Vagina (tissue), 2 donors: ENCODE measurements at regions of chr17 and their contacts with region 1.

Region 1: DNA sequence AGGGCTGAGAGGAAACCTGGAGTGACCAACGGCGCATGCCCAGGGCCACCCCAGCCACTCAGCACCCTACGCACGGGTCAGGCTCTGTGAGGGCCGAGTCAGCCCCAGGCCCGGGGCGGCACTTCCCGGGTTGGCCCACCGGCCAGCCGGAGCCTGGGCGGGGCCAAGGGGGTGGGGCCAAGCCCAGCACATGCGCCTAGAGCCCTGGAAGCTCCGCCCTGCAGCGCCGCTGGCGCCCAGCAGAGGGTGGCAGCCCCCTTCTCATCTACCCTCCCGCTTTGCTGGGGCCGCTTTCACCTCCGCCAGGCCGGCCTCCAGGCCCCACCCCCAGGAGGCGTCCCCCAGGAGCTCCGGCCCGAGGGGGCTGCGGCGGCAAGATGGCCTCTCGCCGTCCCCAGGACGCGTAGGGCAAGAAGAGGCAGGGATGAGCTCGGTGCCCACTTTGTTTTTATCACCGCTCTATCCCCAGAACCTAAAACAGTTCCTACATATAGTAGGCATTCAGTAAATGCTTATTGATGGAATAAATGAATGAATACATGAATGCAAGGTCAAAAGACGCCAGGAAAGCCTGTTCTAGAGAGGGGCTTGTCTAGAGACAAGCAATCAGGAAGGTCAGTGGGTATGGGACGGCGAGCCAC is 31.3 kb downstream of the MYO18A start:
- DNase-seq: no peak
- H3K4me3 ChIP-seq: peak overlapping the region; percentile 42 to 47
- H3K27ac ChIP-seq: peak overlapping the region; percentile 85
- H3K4me1 ChIP-seq: peaks cover 26% of the 10 kb centered on the region
- H3K27me3 ChIP-seq: no peaks in the 10 kb centered on the region
- CTCF ChIP-seq: peak; percentile 87 to 98 (median 94)
- POLR2A ChIP-seq: no peak

Region 2: DNA sequence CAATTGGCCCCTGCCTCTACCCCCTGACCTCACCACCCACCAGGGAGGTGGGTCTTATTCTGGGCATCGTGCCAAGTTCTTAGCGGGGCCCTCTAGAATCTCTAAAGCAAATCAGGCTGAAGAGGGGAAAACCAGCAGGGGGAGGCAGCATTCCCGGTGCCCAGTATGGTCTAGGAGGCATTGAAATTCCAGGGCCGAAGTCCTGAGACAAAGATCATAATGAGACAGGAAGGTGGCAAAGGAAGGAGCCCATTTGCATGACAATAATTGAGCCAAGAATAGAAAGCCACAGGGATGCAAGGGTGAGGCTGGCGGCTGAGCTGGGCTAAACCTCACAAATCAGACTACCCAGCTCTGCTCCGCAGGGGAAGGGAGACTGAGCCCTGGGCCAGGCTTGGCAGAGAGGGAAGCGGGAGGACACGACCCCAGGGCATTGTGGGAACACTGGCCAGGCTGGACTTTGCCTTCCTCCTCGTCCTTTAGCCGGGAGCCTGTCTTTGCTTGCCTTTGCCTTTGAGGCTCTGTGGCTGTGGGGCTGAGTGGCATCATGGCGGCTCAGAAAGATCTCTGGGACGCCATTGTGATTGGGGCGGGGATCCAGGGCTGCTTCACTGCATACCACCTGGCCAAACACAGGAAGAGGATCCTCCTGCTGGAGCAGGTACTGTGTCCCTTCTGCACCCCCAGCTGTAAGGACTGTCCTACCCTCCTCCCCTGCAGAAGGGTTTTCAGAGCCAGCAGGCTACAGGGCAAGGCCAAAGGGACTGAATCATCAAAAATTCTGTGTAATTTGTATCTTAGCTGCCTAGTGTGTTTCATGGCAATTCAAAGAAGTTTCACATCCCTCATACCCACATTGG is 106.0 kb before region 1 on chr17 and contains the start of gene PIPOX:
- intact Hi-C with region 1: no loop called
- DNase-seq: no peak
- H3K4me3 ChIP-seq: no peak within 1 kb of the TSS
- H3K27ac ChIP-seq: no peak within 1 kb of the TSS
- H3K4me1 ChIP-seq: no peaks in the 10 kb centered on the region
- H3K27me3 ChIP-seq: no peaks in the 10 kb centered on the region
- CTCF ChIP-seq: no peak
- POLR2A ChIP-seq: no peak
- total RNA-seq, gene PIPOX: 1.7 TPM

Region 3: GRCh38 chr17:29219378-29220047 is 70.6 kb after region 1 on chr17:
- intact Hi-C with region 1: loop called (anchors 2 kb)
- DNase-seq: no peak
- H3K4me3 ChIP-seq: no peak overlapping the region
- H3K27ac ChIP-seq: no peak overlapping the region
- H3K4me1 ChIP-seq: peaks cover 8% of the 10 kb centered on the region
- H3K27me3 ChIP-seq: no peaks in the 10 kb centered on the region
- CTCF ChIP-seq: peak; percentile 84 to 89 (median 88)
- POLR2A ChIP-seq: no peak

Region 4: DNA sequence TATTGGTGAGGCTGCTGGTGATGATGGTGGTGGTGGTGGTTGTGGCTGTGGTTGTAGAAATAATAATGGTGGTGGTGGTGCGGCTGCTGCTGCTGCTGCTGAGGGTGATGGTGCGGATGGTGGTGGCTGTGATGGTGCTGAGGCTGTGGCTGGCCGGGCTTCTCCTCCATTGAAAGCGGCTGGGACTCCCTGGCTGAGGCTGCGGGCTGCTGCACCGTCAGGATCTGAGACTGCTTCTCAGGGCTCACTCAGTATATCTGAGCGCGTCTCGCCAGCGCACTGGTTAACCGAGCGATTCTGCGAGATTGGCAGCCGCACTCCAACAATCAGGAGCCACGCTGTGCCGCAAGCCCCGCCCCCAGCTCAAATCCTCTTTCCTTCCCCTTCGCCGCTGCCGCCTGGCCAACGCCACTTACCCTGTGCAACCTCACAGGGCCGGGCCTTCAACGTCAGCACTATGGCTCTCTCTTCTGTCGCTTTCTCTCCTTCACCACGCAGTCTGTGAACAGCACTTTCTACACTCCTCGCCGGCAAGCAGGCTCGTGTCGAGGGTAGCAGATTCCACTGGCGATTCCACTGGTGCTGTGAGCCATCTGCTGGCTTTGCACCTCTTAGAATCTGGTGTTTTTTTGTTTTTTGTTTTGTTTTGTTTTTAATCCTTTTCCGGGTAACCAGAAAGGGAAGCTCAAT is 145.1 kb after region 1 on chr17 and contains the start of gene NUFIP2:
- intact Hi-C with region 1: loop called (anchors 5 kb)
- DNase-seq: peak; percentile 97 to 99
- H3K4me3 ChIP-seq: peak within 1 kb of the TSS; percentile 76 to 98
- H3K27ac ChIP-seq: peak within 1 kb of the TSS; percentile 100
- H3K4me1 ChIP-seq: peaks cover 38% of the 10 kb centered on the region
- H3K27me3 ChIP-seq: no peaks in the 10 kb centered on the region
- CTCF ChIP-seq: no peak
- POLR2A ChIP-seq: peak; percentile 89 to 100
- total RNA-seq, gene NUFIP2: 29.7 TPM